B cell (primary cell): ENCODE measurements at regions of chr5 and their contacts with region 1.

Region 1: DNA sequence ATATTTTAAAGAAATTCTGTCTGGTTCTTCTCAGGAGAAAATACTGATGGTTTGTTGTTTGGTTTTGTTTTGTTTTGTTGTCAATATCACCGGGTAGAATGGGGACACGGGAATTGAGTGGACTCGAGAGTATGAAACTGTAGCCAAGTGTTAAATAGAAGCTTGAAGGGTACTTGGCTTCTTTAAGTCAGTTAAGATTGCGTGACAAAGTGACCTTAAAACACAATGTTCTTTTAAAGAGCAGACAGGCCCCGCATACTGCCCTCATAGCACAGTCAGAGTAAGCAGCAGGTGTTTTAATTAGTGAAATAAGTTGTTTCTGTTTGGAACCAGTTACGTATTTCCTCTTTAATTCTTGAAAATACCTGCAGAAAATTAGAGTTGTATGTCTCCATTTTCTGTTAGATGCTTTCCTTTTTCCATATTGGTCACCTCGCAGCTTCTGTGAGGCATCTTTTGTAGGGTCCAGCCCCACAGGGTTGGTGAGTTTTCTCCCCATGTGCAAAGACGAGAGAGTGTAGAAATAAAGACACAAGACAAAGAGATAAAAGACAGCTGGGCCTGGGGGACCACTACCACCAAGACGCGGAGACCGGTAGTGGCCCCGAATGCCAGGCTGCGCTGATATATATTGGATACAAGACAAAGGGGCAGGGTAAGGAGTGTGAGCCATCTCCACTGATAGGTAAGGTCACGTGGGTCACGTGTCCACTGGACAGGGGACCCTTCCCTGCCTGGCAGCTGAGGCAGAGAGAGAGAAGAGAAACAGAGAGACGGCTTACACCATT is 9.6 kb downstream of the TRIP13 start:
- DNase-seq: no peak
- ATAC-seq: no peak
- H3K4me3 ChIP-seq: no peak overlapping the region
- H3K4me3 Mint-ChIP-seq: no peak overlapping the region
- H3K27ac ChIP-seq: no peak overlapping the region
- H3K27ac Mint-ChIP-seq: no peak overlapping the region
- H3K4me1 ChIP-seq: no peaks in the 10 kb centered on the region
- H3K4me1 Mint-ChIP-seq: peaks cover 2% of the 10 kb centered on the region
- H3K27me3 ChIP-seq: no peaks in the 10 kb centered on the region
- H3K27me3 Mint-ChIP-seq: no peaks in the 10 kb centered on the region
- CTCF ChIP-seq: no peak

Region 2: DNA sequence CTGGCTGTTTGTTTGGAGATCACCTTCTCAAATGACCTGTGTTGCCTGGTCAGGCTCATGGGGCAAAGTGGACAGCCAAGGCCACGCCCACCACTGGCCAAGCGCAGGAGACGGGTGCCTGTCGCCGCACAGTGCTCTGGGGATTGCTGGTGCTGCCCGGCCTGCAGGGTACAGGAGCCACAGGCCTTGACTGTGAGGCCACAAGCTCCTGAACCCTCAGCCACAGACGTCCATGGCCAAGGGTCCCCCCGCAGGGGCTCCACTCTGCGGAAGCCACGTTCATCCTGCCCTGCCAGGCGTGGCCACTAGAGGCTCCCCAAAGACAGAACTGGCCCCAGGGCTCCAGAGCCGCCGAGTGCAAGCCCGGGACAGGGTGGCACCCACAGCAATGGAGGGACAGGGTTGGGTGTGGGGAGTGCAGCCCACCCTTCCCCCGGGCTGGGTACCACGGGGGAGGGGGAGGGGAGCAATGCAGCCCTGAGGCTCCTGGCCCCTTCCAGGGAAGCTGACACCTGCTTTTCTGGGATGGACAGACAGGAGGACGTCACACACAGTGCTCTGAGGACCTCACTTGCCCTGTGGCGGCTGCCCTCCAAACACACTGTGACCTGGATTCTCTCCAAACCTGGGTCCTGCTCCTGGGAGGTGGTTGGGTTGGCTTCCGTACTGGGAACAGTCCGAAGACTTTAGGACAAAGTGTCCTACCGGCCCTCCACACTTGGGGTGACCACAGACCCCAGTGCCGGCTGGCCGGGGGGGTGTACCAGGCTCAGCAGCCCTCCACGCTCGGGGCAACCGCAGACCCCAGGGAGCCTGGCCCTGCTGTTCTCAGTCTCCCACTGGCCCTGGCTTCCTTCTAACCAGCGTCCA is 230.6 kb before region 1 on chr5:
- CTCF ChIA-PET with region 1: interaction called, 63 read pairs
- POLR2A ChIA-PET with region 1: no interaction called
- intact Hi-C with region 1: loop called (anchors 2 kb)
- DNase-seq: peak; percentile 69
- ATAC-seq: peak; percentile 79
- H3K4me3 ChIP-seq: no peak overlapping the region
- H3K4me3 Mint-ChIP-seq: no peak overlapping the region
- H3K27ac ChIP-seq: no peak overlapping the region
- H3K27ac Mint-ChIP-seq: no peak overlapping the region
- H3K4me1 ChIP-seq: peaks cover 22 to 23% of the 10 kb centered on the region in 2 donors
- H3K4me1 Mint-ChIP-seq: peaks cover 12% of the 10 kb centered on the region
- H3K27me3 ChIP-seq: peaks cover 0 to 40% (median 5%) of the 10 kb centered on the region in 4 experiments
- H3K27me3 Mint-ChIP-seq: peaks cover 5% of the 10 kb centered on the region
- CTCF ChIP-seq: peak; percentile 82

Region 3: DNA sequence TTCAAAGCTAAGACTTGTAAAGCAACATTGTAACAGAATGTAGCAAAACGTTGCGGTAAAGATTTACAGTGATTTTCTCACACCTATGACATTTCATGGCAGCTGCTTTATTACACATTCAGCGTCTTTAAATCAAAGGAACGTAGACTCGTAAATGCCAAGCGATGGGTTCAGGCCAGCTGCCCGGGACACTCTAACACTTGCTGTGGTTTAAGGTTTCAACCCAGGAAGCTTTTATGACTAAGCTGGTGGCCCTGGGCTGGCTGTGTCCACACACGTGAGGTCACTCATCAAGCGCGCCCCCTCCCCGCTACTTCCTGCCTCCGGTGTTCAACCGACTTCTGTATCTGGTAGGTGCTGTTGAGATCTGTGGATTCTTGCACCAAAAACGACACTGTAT is 325.3 kb after region 1 on chr5:
- CTCF ChIA-PET with region 1: no interaction called
- POLR2A ChIA-PET with region 1: no interaction called
- intact Hi-C with region 1: no loop called
- DNase-seq: no peak
- ATAC-seq: no peak
- H3K4me3 ChIP-seq: no peak overlapping the region
- H3K4me3 Mint-ChIP-seq: no peak overlapping the region
- H3K27ac ChIP-seq: no peak overlapping the region
- H3K27ac Mint-ChIP-seq: no peak overlapping the region
- H3K4me1 ChIP-seq: no peaks in the 10 kb centered on the region
- H3K4me1 Mint-ChIP-seq: no peaks in the 10 kb centered on the region
- H3K27me3 ChIP-seq: peaks cover 0 to 7% (median 0%) of the 10 kb centered on the region in 4 experiments
- H3K27me3 Mint-ChIP-seq: peaks cover 12% of the 10 kb centered on the region
- CTCF ChIP-seq: no peak